Heart left ventricle (tissue), 16 donors: ENCODE measurements at regions of chr10 and their contacts with region 1.

Region 1: DNA sequence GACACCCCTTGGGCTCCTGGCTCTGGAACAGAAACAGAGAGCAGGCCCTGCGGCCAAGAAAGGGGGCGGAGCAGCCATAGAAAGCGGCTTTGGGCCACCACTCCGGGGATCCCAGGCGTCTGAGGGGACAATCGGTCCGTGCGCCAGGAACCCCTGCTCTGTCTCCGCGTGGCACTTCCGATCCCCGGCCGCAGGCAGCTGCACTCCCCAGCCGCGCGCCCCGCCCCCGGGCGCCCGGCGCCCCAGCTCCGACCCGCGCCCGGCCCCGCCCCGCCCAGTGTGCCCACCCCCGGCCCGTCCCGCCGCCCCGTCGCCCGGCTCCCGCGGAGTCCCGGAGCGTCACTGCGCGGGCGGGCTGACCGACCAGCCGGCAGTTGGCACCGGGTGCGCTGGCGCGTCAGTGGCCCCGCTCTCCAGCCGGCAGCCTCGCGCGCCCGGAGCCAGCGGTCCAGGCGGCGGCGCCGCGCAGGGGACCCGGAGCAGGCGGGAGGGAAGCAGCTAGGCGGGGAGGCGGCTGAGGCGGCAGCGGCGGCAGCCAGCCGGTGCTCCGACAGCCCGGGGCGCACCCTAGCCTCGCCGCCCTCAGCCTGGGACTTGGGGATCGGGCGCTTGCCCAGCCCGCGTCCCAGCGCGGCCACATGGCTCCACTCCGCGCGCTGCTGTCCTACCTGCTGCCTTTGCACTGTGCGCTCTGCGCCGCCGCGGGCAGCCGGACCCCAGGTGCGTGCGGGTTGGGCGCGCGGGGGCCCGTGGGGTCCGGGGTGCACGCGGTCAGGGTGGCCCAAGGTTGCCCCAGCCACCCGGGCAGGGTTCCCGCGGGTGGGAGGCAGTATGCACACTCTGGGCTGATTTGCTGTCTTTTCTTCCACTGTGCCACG is at the start of gene ADAMTS14:
- DNase-seq: peak in 4 of 5 donors; percentile 45 to 56 (median 52)
- ATAC-seq: peak in 3 of 4 donors; percentile 26 to 68 (median 65)
- H3K4me3 ChIP-seq: peak within 1 kb of the TSS; percentile 10 to 57 (median 49)
- H3K27ac ChIP-seq: peak within 1 kb of the TSS in 4 of 12 donors; percentile 34 to 71 (median 38)
- H3K4me1 ChIP-seq: peaks cover 0 to 33% (median 17%) of the 10 kb centered on the region in 12 donors
- H3K27me3 ChIP-seq: peaks cover 0 to 23% (median 0%) of the 10 kb centered on the region in 9 donors
- CTCF ChIP-seq: no peak
- POLR2A ChIP-seq: no peak
- total RNA-seq, gene ADAMTS14: 0.16 to 3.8 (median 0.47) TPM in 8 of 9 donors, not detected in the other

Region 2: GRCh38 chr10:70440296-70441160 is 231.9 kb before region 1 on chr10:
- intact Hi-C with region 1: loop called in 1 of 10 experiments (anchors 10 kb)
- DNase-seq: no peak
- ATAC-seq: peak in 3 of 4 donors; percentile 8 to 31 (median 21)
- H3K4me3 ChIP-seq: peak overlapping the region in 10 of 12 donors; percentile 20 to 49 (median 40)
- H3K27ac ChIP-seq: no peak overlapping the region
- H3K4me1 ChIP-seq: peaks cover 0 to 23% (median 15%) of the 10 kb centered on the region in 12 donors
- H3K27me3 ChIP-seq: peaks cover 0 to 42% (median 27%) of the 10 kb centered on the region in 9 donors
- CTCF ChIP-seq: no peak
- POLR2A ChIP-seq: no peak

Region 3: GRCh38 chr10:70742537-70743429 is 70.4 kb after region 1 on chr10:
- intact Hi-C with region 1: loop called in 2 of 10 experiments (anchors 5 to 10 kb)
- DNase-seq: peak; percentile 54 to 75 (median 62)
- ATAC-seq: peak in 3 of 4 donors; percentile 38 to 88 (median 72)
- H3K4me3 ChIP-seq: no peak overlapping the region
- H3K27ac ChIP-seq: peak overlapping the region in 8 of 12 donors; percentile 31 to 86 (median 49)
- H3K4me1 ChIP-seq: peaks cover 0 to 41% (median 20%) of the 10 kb centered on the region in 12 donors
- H3K27me3 ChIP-seq: no peaks in the 10 kb centered on the region
- CTCF ChIP-seq: no peak
- POLR2A ChIP-seq: no peak